ENCODE measurements at regions of chr5 and their contacts with region 1.

Region 1: DNA sequence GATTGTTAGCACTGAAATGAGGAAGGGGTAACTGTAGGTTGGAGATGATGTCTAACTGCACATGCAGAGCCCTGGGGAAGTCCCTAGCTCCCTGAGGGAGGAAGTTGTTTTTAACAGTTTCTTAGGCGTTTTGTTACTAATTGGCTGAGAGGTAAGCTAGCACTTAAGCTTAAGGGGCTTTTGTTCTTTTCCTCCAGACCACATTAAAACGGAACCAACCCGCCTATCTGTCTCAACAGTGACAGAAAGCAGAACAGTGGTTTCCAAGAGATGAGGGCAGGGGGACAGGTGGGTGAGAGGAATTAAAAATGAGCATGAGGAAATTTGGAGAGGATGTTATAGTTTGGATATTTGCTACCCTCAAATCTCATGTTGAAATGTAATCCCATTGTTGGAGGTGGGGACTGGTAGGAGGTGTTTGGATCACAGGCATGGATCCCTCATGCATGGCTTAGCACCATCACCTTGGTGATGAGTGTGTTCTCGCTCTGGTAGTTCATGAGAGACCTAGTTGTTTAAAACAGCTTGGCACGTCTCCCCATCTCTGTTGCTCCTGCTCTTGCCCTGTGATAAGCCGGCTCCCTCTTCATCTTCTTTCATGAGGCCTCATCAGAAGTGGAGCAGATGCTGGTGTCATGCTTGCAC is 38.9 kb downstream of the LYRM7 start:
- DNase-seq: peak; percentile 94
- ATAC-seq: peak; percentile 77
- H3K4me3 ChIP-seq: peak overlapping the region; percentile 84
- H3K27ac ChIP-seq: peak overlapping the region; percentile 94
- H3K4me1 ChIP-seq: peaks cover 14% of the 10 kb centered on the region; the same call in 1 of the 2 replicates
- H3K27me3 ChIP-seq: no peaks in the 10 kb centered on the region
- CTCF ChIP-seq: no peak
- EP300 ChIP-seq: peak; percentile 82 to 88; a peak in 3 of 4 replicates
- POLR2A ChIP-seq: peak; percentile 71
- RAD21 ChIP-seq: peak; percentile 5; the same call in 1 of the 2 replicates

Region 2: DNA sequence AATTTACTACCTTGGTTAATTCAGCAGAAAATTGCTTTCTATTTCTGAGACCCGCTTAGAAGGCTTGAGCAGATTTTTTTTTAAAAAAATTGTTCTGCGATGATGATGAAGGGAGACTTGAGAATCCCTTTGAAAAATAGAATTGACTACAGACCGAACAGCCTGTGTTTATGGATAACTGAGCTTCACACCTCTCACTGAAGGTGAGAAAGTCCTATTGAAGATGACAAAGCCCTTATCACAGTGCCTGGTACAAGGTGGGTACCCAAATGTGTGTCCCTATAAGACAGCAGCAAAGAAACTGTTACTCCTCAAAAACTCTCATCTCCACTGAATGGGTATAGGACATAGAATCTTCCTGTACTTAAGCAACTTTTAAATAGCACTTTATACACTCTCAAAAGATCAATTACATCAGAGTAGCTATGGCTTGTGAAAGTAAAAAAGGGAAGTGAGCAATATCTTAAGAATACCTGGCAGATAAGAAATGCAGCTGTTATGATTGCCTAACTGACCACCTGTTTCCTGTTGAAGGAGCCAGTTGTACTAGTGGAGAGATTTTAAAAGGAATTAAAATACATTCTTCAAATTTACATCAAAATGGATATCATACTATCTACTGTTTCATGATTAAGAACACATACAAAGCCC is 885.7 kb before region 1 on chr5:
- CTCF ChIA-PET with region 1: no interaction called
- POLR2A ChIA-PET with region 1: no interaction called
- RAD21 ChIA-PET with region 1: no interaction called
- SMC1A ChIA-PET with region 1: no interaction called
- in situ Hi-C with region 1: no loop called
- intact Hi-C with region 1: no loop called
- DNase-seq: peak; percentile 72
- ATAC-seq: peak; percentile 98
- H3K4me3 ChIP-seq: no peak overlapping the region
- H3K27ac ChIP-seq: peak overlapping the region; percentile 70
- H3K4me1 ChIP-seq: peaks cover 14% of the 10 kb centered on the region
- H3K27me3 ChIP-seq: no peaks in the 10 kb centered on the region
- CTCF ChIP-seq: no peak
- EP300 ChIP-seq: peak; percentile 95 to 97
- POLR2A ChIP-seq: no peak
- RAD21 ChIP-seq: no peak

Region 3: GRCh38 chr5:131165119-131165727 is 44.4 kb before region 1 on chr5 and contains the start of gene HINT1:
- CTCF ChIA-PET with region 1: interaction called, 5 read pairs
- POLR2A ChIA-PET with region 1: interaction called, 4 read pairs
- RAD21 ChIA-PET with region 1: interaction called, 9 read pairs
- SMC1A ChIA-PET with region 1: interaction called, 5 read pairs
- in situ Hi-C with region 1: no loop called
- intact Hi-C with region 1: loop called (anchors 1 kb)
- DNase-seq: peak; percentile 75
- ATAC-seq: peak; percentile 90
- H3K4me3 ChIP-seq: peak within 1 kb of the TSS; percentile 92
- H3K27ac ChIP-seq: peak within 1 kb of the TSS; percentile 86
- H3K4me1 ChIP-seq: peaks cover 3% of the 10 kb centered on the region; the same call in 1 of the 2 replicates
- H3K27me3 ChIP-seq: no peaks in the 10 kb centered on the region
- CTCF ChIP-seq: peak in 2 of 3 experiments; percentile 18 to 45; a peak in 4 of 6 replicates
- EP300 ChIP-seq: no peak
- POLR2A ChIP-seq: peak; percentile 85
- RAD21 ChIP-seq: peak; percentile 38; the same call in 1 of the 2 replicates
- polyA plus RNA-seq, gene HINT1: 844 to 901 TPM

Region 4: DNA sequence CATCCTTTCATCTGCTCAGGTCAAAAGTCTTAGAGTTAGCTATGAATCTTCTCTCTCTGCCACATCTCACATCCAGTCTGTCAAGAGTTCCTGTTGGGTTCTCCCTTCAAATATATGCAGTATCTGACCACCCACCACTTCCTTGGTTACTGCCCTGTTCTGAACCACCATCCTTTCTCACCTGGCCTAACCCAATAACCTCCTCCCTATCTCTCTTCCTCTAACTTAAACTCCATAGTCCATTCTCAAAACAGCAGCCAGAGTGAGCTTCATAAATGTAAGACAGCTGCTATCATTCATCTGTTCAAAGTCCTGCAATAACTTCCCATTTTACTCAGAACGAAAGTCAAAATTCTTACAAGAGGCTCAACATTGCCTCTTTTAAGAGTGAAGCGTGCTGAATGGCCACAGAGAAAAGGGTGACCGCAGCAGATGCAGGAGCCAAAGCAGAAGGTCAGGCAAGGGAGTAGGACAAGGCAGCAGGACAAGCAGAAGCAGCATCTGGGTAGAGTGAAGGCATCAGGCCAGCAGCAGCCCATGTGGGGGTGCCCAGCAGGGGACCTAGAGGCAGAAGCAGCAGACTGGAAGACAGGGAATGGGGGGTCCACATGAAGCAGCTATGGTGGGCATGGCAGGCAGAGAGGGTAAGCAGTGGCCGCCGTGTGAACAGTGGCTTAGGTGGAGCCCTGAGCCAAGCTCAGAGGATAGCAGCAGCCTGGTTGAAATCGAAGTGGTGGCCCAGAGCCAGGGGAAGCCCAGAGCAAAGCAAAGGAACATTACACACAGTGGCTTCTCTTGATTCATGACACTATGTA is 15.0 kb after region 1 on chr5:
- CTCF ChIA-PET with region 1: interaction called, 33 read pairs
- POLR2A ChIA-PET with region 1: interaction called, 142 read pairs
- RAD21 ChIA-PET with region 1: interaction called, 117 read pairs
- SMC1A ChIA-PET with region 1: interaction called, 166 read pairs
- in situ Hi-C with region 1: no loop called
- intact Hi-C with region 1: loop called (anchors 1 kb)
- DNase-seq: peak; percentile 96
- ATAC-seq: peak; percentile 82
- H3K4me3 ChIP-seq: peak overlapping the region; percentile 64
- H3K27ac ChIP-seq: peak overlapping the region; percentile 78
- H3K4me1 ChIP-seq: peaks cover 30% of the 10 kb centered on the region
- H3K27me3 ChIP-seq: no peaks in the 10 kb centered on the region
- CTCF ChIP-seq: no peak
- EP300 ChIP-seq: peak; percentile 94 to 96
- POLR2A ChIP-seq: peak; percentile 75
- RAD21 ChIP-seq: no peak; the same call in 1 of the 2 replicates

Region 5: GRCh38 chr5:131258733-131259132 is 49.1 kb after region 1 on chr5:
- CTCF ChIA-PET with region 1: interaction called, 36 read pairs
- POLR2A ChIA-PET with region 1: interaction called, 309 read pairs
- RAD21 ChIA-PET with region 1: interaction called, 302 read pairs
- SMC1A ChIA-PET with region 1: interaction called, 1,218 read pairs
- in situ Hi-C with region 1: no loop called
- intact Hi-C with region 1: no loop called
- DNase-seq: no peak
- ATAC-seq: no peak
- H3K4me3 ChIP-seq: no peak overlapping the region
- H3K27ac ChIP-seq: peak overlapping the region; percentile 35
- H3K4me1 ChIP-seq: peaks cover 24% of the 10 kb centered on the region
- H3K27me3 ChIP-seq: no peaks in the 10 kb centered on the region
- CTCF ChIP-seq: no peak
- EP300 ChIP-seq: no peak
- POLR2A ChIP-seq: no peak
- RAD21 ChIP-seq: no peak

Region 6: GRCh38 chr5:131375351-131375750 is 165.7 kb after region 1 on chr5:
- CTCF ChIA-PET with region 1: interaction called, 3 read pairs
- POLR2A ChIA-PET with region 1: interaction called, 17 read pairs
- RAD21 ChIA-PET with region 1: interaction called, 66 read pairs
- SMC1A ChIA-PET with region 1: interaction called, 55 read pairs
- in situ Hi-C with region 1: loop called (anchors 5 kb)
- intact Hi-C with region 1: no loop called
- DNase-seq: no peak
- ATAC-seq: peak; percentile 35
- H3K4me3 ChIP-seq: peak overlapping the region; percentile 37; the same call in 1 of the 2 replicates
- H3K27ac ChIP-seq: peak overlapping the region; percentile 88
- H3K4me1 ChIP-seq: peaks cover 77% of the 10 kb centered on the region
- H3K27me3 ChIP-seq: no peaks in the 10 kb centered on the region
- CTCF ChIP-seq: no peak
- EP300 ChIP-seq: no peak
- POLR2A ChIP-seq: no peak
- RAD21 ChIP-seq: no peak

Measured in GM12878 (cell line).